CD8-positive, alpha-beta T cell (primary cell): ENCODE measurements at regions of chr4 and their contacts with region 1.

Region 1: GRCh38 chr4:18021722-18022571 is at the start of gene LCORL:
- DNase-seq: peak; percentile 75 to 95 (median 86)
- ATAC-seq: peak; percentile 83
- H3K4me3 ChIP-seq: peak within 1 kb of the TSS; percentile 63 to 98
- H3K4me3 Mint-ChIP-seq: peak within 1 kb of the TSS; percentile 95
- H3K27ac ChIP-seq: peak within 1 kb of the TSS; percentile 63 to 80
- H3K27ac Mint-ChIP-seq: peak within 1 kb of the TSS; percentile 89
- H3K4me1 ChIP-seq: peaks cover 18% of the 10 kb centered on the region
- H3K4me1 Mint-ChIP-seq: peaks cover 27% of the 10 kb centered on the region
- H3K27me3 ChIP-seq: no peaks in the 10 kb centered on the region
- H3K27me3 Mint-ChIP-seq: peaks cover 2% of the 10 kb centered on the region
- CTCF ChIP-seq: no peak
- total RNA-seq, gene LCORL: 5.3 to 7.5 TPM

Region 2: DNA sequence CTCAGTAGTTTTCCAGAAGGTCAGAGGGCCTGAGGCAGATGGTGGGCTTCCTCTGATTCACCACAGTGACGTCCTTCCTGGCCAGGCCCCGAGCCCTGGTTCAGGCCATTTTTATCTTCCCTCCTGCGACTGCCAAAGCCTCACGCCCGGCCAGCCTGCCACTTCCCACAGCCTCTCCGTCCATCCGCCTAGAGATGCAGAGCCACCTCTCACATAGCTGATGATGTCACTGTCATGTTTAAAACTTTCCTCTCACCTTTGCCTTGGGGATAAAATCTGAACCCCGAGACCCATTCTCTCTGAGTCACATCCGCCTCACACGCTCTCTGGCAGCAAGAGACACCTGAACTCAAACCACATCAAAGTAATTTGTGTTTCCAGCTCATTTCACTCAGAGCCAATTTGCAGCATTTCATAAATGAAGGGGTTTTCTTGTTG is 685.4 kb before region 1 on chr4:
- CTCF ChIA-PET with region 1: no interaction called
- POLR2A ChIA-PET with region 1: no interaction called
- intact Hi-C with region 1: loop called in 1 of 2 experiments (anchors 5 kb)
- DNase-seq: peak; percentile 32 to 90 (median 70)
- ATAC-seq: peak; percentile 95
- H3K4me3 ChIP-seq: no peak overlapping the region
- H3K4me3 Mint-ChIP-seq: peak overlapping the region; percentile 27
- H3K27ac ChIP-seq: peak overlapping the region in 1 of 2 experiments; percentile 44
- H3K27ac Mint-ChIP-seq: peak overlapping the region; percentile 91
- H3K4me1 ChIP-seq: peaks cover 17% of the 10 kb centered on the region
- H3K4me1 Mint-ChIP-seq: peaks cover 22% of the 10 kb centered on the region
- H3K27me3 ChIP-seq: no peaks in the 10 kb centered on the region
- H3K27me3 Mint-ChIP-seq: no peaks in the 10 kb centered on the region
- CTCF ChIP-seq: no peak

Region 3: GRCh38 chr4:17511950-17512795 is 509.8 kb before region 1 on chr4 and contains the start of gene QDPR:
- CTCF ChIA-PET with region 1: no interaction called
- POLR2A ChIA-PET with region 1: no interaction called
- intact Hi-C with region 1: loop called (anchors 1 to 5 kb)
- DNase-seq: peak; percentile 38 to 86 (median 70)
- ATAC-seq: peak; percentile 91
- H3K4me3 ChIP-seq: peak within 1 kb of the TSS; percentile 63 to 80
- H3K4me3 Mint-ChIP-seq: peak within 1 kb of the TSS; percentile 99
- H3K27ac ChIP-seq: peak within 1 kb of the TSS; percentile 49 to 57
- H3K27ac Mint-ChIP-seq: peak within 1 kb of the TSS; percentile 93
- H3K4me1 ChIP-seq: peaks cover 18% of the 10 kb centered on the region
- H3K4me1 Mint-ChIP-seq: peaks cover 33% of the 10 kb centered on the region
- H3K27me3 ChIP-seq: no peaks in the 10 kb centered on the region
- H3K27me3 Mint-ChIP-seq: peaks cover 6% of the 10 kb centered on the region
- CTCF ChIP-seq: peak; percentile 30
- total RNA-seq, gene QDPR: 10.9 to 11.6 TPM

Region 4: GRCh38 chr4:18007625-18008024 is 14.3 kb before region 1 on chr4:
- CTCF ChIA-PET with region 1: no interaction called
- POLR2A ChIA-PET with region 1: no interaction called
- intact Hi-C with region 1: no loop called
- DNase-seq: no peak
- ATAC-seq: no peak
- H3K4me3 ChIP-seq: no peak overlapping the region
- H3K4me3 Mint-ChIP-seq: no peak overlapping the region
- H3K27ac ChIP-seq: no peak overlapping the region
- H3K27ac Mint-ChIP-seq: no peak overlapping the region
- H3K4me1 ChIP-seq: peaks cover 5% of the 10 kb centered on the region
- H3K4me1 Mint-ChIP-seq: peaks cover 41% of the 10 kb centered on the region
- H3K27me3 ChIP-seq: no peaks in the 10 kb centered on the region
- H3K27me3 Mint-ChIP-seq: no peaks in the 10 kb centered on the region
- CTCF ChIP-seq: no peak

Region 5: GRCh38 chr4:18057821-18058533 is 36.0 kb after region 1 on chr4:
- CTCF ChIA-PET with region 1: interaction called, 4 read pairs
- POLR2A ChIA-PET with region 1: interaction called, 3 read pairs
- intact Hi-C with region 1: loop called in 1 of 2 experiments (anchors 2 kb)
- DNase-seq: no peak
- ATAC-seq: no peak
- H3K4me3 ChIP-seq: no peak overlapping the region
- H3K4me3 Mint-ChIP-seq: no peak overlapping the region
- H3K27ac ChIP-seq: no peak overlapping the region
- H3K27ac Mint-ChIP-seq: no peak overlapping the region
- H3K4me1 ChIP-seq: peaks cover 17% of the 10 kb centered on the region
- H3K4me1 Mint-ChIP-seq: peaks cover 19% of the 10 kb centered on the region
- H3K27me3 ChIP-seq: peaks cover 5 to 13% of the 10 kb centered on the region in 2 experiments
- H3K27me3 Mint-ChIP-seq: peaks cover 40% of the 10 kb centered on the region
- CTCF ChIP-seq: no peak